ENCODE measurements at regions of chr3 and their contacts with region 1.

Region 1: GRCh38 chr3:12316776-12317243 is 27.9 kb downstream of the PPARG start:
- DNase-seq: no peak
- ATAC-seq: no peak
- H3K4me3 ChIP-seq: no peak overlapping the region
- H3K27ac ChIP-seq: peak overlapping the region in 5 of 10 donors; percentile 8 to 82 (median 28)
- H3K4me1 ChIP-seq: peaks cover 0 to 44% (median 28%) of the 10 kb centered on the region in 9 donors
- H3K27me3 ChIP-seq: no peaks in the 10 kb centered on the region
- CTCF ChIP-seq: no peak

Region 2: GRCh38 chr3:12143949-12144504 is 172.8 kb before region 1 on chr3:
- intact Hi-C with region 1: loop called in 1 of 10 experiments (anchors 10 kb)
- DNase-seq: peak; percentile 52 to 54
- ATAC-seq: peak; percentile 79 to 95 (median 86)
- H3K4me3 ChIP-seq: peak overlapping the region in 1 of 10 donors; percentile 18
- H3K27ac ChIP-seq: peak overlapping the region; percentile 60 to 89 (median 80)
- H3K4me1 ChIP-seq: peaks cover 6 to 68% (median 56%) of the 10 kb centered on the region in 9 donors
- H3K27me3 ChIP-seq: no peaks in the 10 kb centered on the region
- CTCF ChIP-seq: no peak

Region 3: DNA sequence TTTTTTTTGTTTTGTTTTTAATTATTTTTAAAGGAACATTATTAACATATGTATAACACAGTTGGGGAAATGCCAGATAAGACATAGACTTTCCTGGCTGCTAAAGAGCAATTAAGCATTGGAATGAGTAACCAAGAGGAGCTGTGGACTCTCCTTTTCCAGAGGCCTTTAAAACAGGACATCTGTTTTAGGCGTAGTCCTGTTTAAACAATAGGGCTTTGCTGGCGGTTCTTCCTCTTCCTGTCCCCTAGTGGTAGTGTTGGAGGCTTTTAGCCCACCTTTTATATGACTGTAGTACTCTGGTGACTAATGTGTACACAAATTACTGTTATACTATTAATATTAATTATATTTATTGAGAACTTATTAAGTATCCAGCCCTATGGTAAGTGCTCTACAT is 53.9 kb after region 1 on chr3:
- intact Hi-C with region 1: loop called in 2 of 10 experiments (anchors 2 to 5 kb)
- DNase-seq: peak in 1 of 2 donors; percentile 44
- ATAC-seq: peak; percentile 71 to 96 (median 89)
- H3K4me3 ChIP-seq: no peak overlapping the region
- H3K27ac ChIP-seq: peak overlapping the region; percentile 22 to 81 (median 56)
- H3K4me1 ChIP-seq: peaks cover 0 to 40% (median 29%) of the 10 kb centered on the region in 9 donors
- H3K27me3 ChIP-seq: peaks cover 0 to 2% (median 0%) of the 10 kb centered on the region in 7 donors
- CTCF ChIP-seq: peak in 7 of 9 donors; percentile 34 to 58 (median 40)